Activated CD4-positive, alpha-beta memory T cell treated with anti-CD3 and anti-CD28 coated beads for 36 hours (primary cell): ENCODE measurements at regions of chr3 and their contacts with region 1.

Region 1: GRCh38 chr3:68256635-68257223 is 602.3 kb upstream of the SUCLG2 start:
- DNase-seq: peak; percentile 36
- H3K4me3 Mint-ChIP-seq: no peak overlapping the region
- H3K27ac Mint-ChIP-seq: no peak overlapping the region
- H3K4me1 Mint-ChIP-seq: no peaks in the 10 kb centered on the region
- H3K27me3 Mint-ChIP-seq: no peaks in the 10 kb centered on the region

Region 2: DNA sequence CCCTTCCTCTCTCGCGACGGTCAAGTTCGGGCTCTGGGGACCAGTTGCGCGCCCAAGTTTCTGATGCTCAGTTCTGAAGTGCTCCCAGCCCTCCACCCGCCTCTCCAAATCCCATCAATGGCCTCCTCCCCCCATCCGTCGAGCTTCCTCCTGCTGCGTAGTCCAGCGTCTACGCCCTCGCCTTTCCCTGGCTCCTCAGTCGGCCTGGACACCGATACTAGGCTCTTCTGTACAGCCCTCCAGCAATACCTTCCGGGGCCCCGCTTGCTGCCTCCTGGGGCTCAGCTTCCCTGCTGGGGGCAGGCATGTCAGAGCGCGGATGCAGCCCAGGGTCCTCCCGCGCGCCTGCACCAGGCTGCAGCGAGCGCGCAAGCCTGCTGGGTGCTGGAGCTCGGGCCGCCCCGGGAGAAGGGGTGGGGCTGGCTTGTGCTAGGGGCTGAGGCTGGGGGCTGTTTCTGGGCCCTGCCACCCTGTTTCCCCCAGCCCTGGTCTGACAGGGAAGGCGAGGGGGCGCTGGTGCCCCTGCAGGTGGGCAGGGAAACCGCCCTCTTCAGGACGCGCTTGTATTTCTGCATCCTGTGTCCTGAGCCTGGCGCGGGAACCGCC is 249.0 kb before region 1 on chr3:
- CTCF ChIA-PET with region 1: no interaction called
- POLR2A ChIA-PET with region 1: no interaction called
- intact Hi-C with region 1: loop called (anchors 10 kb)
- DNase-seq: peak; percentile 30
- H3K4me3 Mint-ChIP-seq: peak overlapping the region; percentile 78
- H3K27ac Mint-ChIP-seq: no peak overlapping the region
- H3K4me1 Mint-ChIP-seq: peaks cover 12% of the 10 kb centered on the region
- H3K27me3 Mint-ChIP-seq: peaks cover 7% of the 10 kb centered on the region

Region 3: DNA sequence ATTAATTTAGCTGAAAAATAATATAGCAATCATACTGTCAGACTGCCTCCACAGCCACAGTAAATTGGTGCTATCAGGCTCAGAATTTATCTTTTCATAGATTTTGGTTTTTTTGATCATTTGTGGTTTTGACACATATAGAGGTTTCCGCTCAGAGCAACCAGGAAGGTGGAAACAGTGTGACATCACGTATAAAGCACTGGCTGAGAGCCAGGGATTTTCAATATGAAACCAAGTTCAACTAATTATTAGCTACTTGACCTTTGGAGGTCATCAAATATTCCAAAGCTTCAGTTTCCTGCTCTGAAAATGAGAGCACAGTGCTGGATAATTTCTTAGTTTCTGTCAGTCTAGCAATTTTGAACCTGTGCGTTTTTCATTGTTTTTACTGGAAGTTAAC is 168.5 kb before region 1 on chr3:
- CTCF ChIA-PET with region 1: no interaction called
- POLR2A ChIA-PET with region 1: no interaction called
- intact Hi-C with region 1: no loop called
- DNase-seq: peak; percentile 52
- H3K4me3 Mint-ChIP-seq: no peak overlapping the region
- H3K27ac Mint-ChIP-seq: no peak overlapping the region
- H3K4me1 Mint-ChIP-seq: peaks cover 65% of the 10 kb centered on the region
- H3K27me3 Mint-ChIP-seq: no peaks in the 10 kb centered on the region